RWPE1 (cell line): ENCODE measurements at regions of chr4 and their contacts with region 1.

Region 1: GRCh38 chr4:173257732-173258717 is 76.1 kb downstream of the HMGB2 start:
- DNase-seq: peak; percentile 54
- H3K27ac ChIP-seq: no peak overlapping the region
- CTCF ChIP-seq: peak; percentile 86

Region 2: DNA sequence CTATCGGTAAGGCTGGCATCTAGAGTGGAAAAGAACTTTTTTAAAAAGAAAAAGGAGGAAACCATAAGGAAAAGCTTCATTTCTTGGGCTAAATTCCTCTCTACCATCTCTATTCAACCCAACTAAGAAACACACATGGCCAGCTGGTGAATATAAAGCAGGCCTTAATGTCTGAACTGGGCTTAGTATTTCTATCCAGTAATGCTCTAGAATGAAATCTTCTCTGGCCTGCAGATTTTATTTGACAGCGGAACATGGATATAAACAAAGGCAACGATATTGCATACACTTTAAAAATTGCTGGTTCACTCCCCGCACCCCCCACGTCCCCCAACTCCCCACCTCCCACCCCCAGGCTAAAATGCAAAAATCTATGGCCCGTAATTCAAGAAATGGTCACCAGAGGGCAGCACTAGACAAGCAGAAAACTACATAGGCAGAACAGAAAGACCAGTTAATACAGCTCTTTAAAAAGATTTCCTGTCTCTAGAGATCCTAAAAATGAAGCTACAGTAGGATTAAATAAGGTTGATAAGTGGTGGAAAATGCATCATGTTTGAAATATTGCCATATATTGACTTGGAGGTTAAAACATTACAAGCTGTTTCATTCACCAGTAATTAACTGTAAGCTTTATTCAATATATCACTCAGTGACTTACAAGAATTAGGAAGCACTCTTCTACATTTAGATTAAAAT is 244.6 kb before region 1 on chr4:
- CTCF ChIA-PET with region 1: interaction called, 18 read pairs
- POLR2A ChIA-PET with region 1: no interaction called
- DNase-seq: peak; percentile 47
- H3K27ac ChIP-seq: no peak overlapping the region
- CTCF ChIP-seq: peak; percentile 79

Region 3: GRCh38 chr4:173025131-173025530 is 232.9 kb before region 1 on chr4:
- CTCF ChIA-PET with region 1: interaction called, 25 read pairs
- POLR2A ChIA-PET with region 1: no interaction called
- DNase-seq: peak; percentile 63
- H3K27ac ChIP-seq: no peak overlapping the region
- CTCF ChIP-seq: peak; percentile 68